ENCODE measurements at regions of chr7 and their contacts with region 1.

Region 1: DNA sequence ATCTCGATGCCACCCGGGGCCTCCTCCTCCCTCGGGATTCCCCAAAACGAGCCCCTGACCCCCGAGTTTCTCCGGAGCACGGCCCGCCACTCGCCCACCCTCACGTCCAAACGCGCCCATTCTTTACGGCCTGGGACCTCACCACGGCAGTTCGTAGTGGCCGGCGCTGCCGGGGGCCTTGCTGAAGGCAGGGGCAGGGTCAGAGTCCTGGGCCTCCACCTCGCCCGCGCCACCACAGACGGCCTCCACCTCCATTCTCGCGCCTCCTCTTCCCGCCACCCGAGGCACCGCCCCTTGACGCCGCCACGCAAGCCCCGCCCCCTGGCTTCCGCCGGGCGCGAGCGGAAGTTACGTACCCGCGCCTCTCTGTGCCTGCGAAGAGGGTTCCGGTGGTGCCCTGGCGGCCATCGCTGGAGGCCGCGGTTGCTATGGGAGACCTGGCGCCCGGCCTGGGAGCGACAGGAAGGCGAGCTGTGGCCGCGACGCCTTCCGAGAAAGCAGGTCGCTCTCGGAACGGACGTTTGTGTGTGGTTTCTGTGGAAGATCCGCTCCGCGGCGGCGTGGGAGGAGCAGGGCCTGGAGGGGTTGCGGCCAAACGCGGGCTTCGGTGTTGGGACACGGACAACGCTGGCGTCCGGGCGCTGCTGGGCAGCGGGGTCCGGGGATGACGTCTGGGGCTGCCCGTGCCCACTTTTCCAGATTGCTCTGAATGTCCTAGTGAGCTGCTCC is at the start of gene RFC2:
- DNase-seq: peak; percentile 97 to 99 (median 99)
- ATAC-seq: peak; percentile 98
- H3K4me3 ChIP-seq: peak within 1 kb of the TSS; percentile 98
- H3K27ac ChIP-seq: peak within 1 kb of the TSS; percentile 93
- H3K4me1 ChIP-seq: peaks cover 9 to 24% of the 10 kb centered on the region in 2 experiments; a peak in 3 of 5 replicates
- H3K27me3 ChIP-seq: no peaks in the 10 kb centered on the region
- CTCF ChIP-seq: peak in 2 of 3 experiments; percentile 30 to 37; a peak in 2 of 6 replicates
- EP300 ChIP-seq: no peak
- POLR2A ChIP-seq: peak; percentile 92
- RAD21 ChIP-seq: no peak; a peak in 1 of 4 replicates
- polyA plus RNA-seq, gene RFC2: 32.5 to 55.6 TPM

Region 2: DNA sequence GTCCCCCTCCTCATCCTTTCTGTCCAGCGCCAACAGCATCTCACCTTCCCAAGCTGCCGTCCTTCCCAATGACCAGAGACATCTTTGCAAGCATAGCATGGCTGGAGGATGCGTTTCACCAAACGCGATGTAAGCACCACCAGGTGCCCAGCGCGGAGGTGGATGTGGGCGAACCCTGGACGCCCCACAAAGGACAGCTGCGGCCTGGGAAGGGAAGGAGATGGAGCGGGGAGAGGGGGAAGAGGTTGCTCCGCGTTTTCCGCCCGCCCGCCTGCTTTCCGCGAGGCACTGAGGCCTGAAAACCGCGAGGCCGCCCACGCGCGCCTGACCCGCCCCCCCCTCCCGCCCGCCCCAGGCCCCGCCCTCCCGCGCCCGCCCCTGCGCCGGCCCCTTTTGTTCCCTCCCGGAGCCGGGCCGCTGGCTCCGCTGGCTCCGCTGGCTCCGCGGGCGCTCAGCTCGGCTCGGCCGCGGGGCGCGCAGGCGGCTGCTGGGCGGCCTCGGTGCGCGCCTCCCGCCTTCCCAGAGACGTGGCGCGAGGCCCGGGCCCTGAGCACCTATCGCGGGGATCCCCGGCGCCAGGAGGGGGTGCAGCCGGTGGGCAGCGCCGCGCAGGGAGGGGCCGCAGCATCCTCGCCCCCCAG is 34.8 kb after region 1 on chr7 and contains the start of gene CLIP2:
- CTCF ChIA-PET with region 1: no interaction called
- POLR2A ChIA-PET with region 1: interaction called, 6 read pairs
- in situ Hi-C with region 1: no loop called
- intact Hi-C with region 1: loop called (anchors 1 kb)
- DNase-seq: peak; percentile 87 to 98 (median 96)
- ATAC-seq: peak; percentile 97
- H3K4me3 ChIP-seq: peak within 1 kb of the TSS; percentile 51
- H3K27ac ChIP-seq: peak within 1 kb of the TSS; percentile 48; the same call in 1 of the 3 replicates
- H3K4me1 ChIP-seq: peaks cover 26 to 34% of the 10 kb centered on the region in 2 experiments
- H3K27me3 ChIP-seq: peaks cover 3 to 19% of the 10 kb centered on the region in 2 experiments; a peak in 4 of 5 replicates
- CTCF ChIP-seq: 0 out of 6 replicates have a peak, but pooled peaks of 1 of the 3 experiments have one; percentile 10
- EP300 ChIP-seq: no peak
- POLR2A ChIP-seq: no peak
- RAD21 ChIP-seq: no peak; a peak in 1 of 4 replicates
- polyA plus RNA-seq, gene CLIP2: 0.07 to 0.10 TPM

Region 3: DNA sequence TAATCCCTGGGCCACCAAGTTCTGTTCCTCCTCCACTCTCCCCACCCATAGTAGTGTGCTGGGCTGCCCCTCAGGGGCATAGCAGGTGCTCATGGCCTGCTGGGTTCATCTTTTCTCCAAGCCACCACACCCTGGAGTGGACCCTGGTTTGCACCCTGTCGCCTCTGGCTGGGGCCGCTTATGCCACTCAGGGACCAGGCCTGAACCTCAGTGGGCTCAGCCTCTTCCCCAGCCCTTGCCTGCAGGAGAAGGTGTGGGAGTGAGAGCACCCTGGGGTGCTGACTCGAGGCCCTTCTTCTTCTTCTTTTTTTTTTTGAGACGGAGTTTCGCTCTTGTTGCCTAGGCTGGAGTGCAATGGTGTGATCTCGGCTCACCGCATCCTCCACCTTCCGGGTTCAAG is 45.1 kb after region 1 on chr7:
- CTCF ChIA-PET with region 1: no interaction called
- POLR2A ChIA-PET with region 1: no interaction called
- in situ Hi-C with region 1: no loop called
- intact Hi-C with region 1: no loop called
- DNase-seq: peak in 1 of 4 experiments; percentile 12
- ATAC-seq: no peak
- H3K4me3 ChIP-seq: no peak overlapping the region
- H3K27ac ChIP-seq: no peak overlapping the region
- H3K4me1 ChIP-seq: peaks cover 0 to 18% of the 10 kb centered on the region in 2 experiments; a peak in 3 of 5 replicates
- H3K27me3 ChIP-seq: peaks cover 0 to 9% of the 10 kb centered on the region in 2 experiments; a peak in 2 of 5 replicates
- CTCF ChIP-seq: no peak
- EP300 ChIP-seq: no peak
- POLR2A ChIP-seq: no peak
- RAD21 ChIP-seq: no peak

Region 4: DNA sequence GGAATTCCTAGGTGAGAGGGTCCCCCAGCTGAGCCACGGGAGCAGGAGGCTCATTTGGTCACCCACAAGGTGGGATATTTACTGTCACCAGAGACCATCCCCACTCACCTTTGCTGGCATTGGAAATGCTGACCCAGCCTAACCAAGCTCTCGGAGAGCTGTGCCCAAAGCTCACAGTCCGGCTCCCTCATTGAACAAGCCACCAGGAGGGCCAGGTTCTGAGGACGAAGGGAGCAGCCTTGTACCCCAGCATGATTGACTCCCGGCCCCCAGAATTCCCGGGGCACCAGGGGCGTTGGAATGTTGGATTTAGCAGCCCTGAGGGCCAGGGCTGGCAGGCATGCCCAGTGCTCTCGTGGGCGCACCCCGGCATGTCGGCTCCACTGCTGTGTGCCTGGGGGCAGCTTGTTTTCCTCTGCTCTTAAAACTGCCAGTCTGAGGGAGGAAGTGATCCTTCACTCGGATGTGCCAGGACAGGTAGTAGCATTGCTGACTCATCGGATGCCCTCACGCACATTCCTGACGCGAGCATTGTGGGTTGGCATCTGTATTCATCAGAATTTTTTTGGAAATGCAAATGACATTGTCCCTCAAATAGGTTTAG is 58.2 kb after region 1 on chr7:
- CTCF ChIA-PET with region 1: no interaction called
- POLR2A ChIA-PET with region 1: interaction called, 3 read pairs
- in situ Hi-C with region 1: no loop called
- intact Hi-C with region 1: loop called (anchors 10 kb)
- DNase-seq: no peak
- ATAC-seq: no peak
- H3K4me3 ChIP-seq: no peak overlapping the region
- H3K27ac ChIP-seq: no peak overlapping the region
- H3K4me1 ChIP-seq: peaks cover 0 to 6% of the 10 kb centered on the region in 2 experiments; a peak in 2 of 5 replicates
- H3K27me3 ChIP-seq: peaks cover 0 to 12% of the 10 kb centered on the region in 2 experiments; a peak in 2 of 5 replicates
- CTCF ChIP-seq: no peak
- EP300 ChIP-seq: no peak
- POLR2A ChIP-seq: no peak
- RAD21 ChIP-seq: no peak

Region 5: DNA sequence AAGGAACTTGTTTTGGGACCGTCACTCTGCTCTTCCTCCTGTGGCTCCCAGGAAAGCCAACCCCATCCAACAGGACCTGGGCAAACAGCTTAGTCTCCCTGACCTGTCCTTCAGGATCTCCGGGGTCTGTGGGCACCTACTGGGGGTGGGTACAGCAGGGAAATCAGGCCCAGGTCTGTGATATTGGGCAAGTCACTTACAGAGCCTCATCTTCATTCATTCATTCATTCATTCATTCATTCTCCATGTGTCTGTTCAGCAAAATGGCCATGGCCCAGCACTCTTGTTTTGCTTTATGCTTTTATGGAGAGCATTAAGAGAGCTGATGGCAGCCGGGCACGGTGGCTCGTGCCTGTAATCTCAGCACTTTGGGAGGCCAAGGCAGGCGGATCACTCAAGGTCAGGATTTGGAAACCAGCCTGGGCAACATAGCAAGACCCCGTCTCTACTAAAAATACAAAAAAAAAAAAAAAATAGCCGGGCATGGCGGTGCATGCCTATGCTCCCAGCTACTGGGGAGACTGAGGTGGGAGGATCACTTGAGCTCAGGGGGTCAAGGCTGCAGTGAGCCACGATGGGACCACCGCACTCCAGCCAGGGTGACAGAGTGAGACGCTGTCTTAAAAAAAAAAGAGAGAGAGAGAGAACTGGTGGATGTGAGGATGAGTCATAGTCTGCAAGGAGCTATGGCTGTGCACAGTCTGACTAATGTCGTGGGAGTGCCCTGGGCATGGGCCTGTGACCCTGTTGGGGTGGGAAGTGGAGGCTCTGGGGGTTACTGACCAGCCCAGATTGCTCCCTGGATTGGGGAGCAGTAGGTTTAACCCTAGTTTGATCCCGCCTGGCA is 89.2 kb after region 1 on chr7:
- CTCF ChIA-PET with region 1: no interaction called
- POLR2A ChIA-PET with region 1: no interaction called
- in situ Hi-C with region 1: no loop called
- intact Hi-C with region 1: no loop called
- DNase-seq: peak; percentile 42 to 50 (median 48)
- ATAC-seq: peak; percentile 32; the same call in 2 of the 3 replicates
- H3K4me3 ChIP-seq: no peak overlapping the region
- H3K27ac ChIP-seq: no peak overlapping the region
- H3K4me1 ChIP-seq: peaks cover 0 to 9% of the 10 kb centered on the region in 2 experiments; a peak in 3 of 5 replicates
- H3K27me3 ChIP-seq: no peaks in the 10 kb centered on the region; a peak in 1 of 5 replicates
- CTCF ChIP-seq: no peak
- EP300 ChIP-seq: no peak
- POLR2A ChIP-seq: no peak
- RAD21 ChIP-seq: no peak

Region 6: DNA sequence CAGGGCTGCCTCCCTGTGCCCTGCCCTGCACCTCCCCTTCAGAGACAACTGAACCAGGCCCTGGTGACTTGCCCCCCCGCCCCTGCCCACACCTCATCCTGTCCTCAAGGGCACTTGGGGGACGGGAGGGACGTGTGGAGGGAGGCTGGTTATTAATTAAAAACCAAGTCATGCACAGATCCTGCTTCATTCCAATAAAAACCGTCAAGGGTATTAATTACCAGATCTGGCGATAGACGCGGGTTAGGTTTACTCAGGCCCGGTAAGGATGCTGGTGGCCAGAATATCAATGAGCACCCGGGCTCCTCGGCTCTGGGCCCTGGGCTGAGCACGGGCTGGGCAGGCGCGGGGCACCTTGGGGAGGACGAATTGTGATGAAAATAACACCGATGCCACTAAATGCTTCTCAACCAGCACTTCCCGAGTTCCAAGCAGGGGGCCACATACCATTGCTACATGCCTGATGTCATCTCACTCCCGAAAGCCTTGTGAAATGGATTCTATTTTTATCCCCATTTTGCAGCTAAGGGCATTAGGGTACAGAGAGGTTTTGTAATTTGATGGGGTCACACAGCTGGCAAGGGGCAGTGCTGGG is 175.0 kb after region 1 on chr7:
- CTCF ChIA-PET with region 1: no interaction called
- POLR2A ChIA-PET with region 1: no interaction called
- in situ Hi-C with region 1: no loop called
- intact Hi-C with region 1: no loop called
- DNase-seq: no peak
- ATAC-seq: no peak
- H3K4me3 ChIP-seq: no peak overlapping the region
- H3K27ac ChIP-seq: no peak overlapping the region
- H3K4me1 ChIP-seq: no peaks in the 10 kb centered on the region
- H3K27me3 ChIP-seq: peaks cover 3 to 36% of the 10 kb centered on the region in 2 experiments; a peak in 3 of 5 replicates
- CTCF ChIP-seq: no peak
- EP300 ChIP-seq: no peak
- POLR2A ChIP-seq: no peak
- RAD21 ChIP-seq: no peak